CD14-positive monocyte (primary cell): ENCODE measurements at regions of chr1 and their contacts with region 1.

Region 1: GRCh38 chr1:165630629-165631341 is at the start of gene MGST3:
- DNase-seq: peak; percentile 90 to 93 (median 92)
- H3K4me3 ChIP-seq: peak within 1 kb of the TSS; percentile 75 to 90 (median 83)
- H3K4me3 Mint-ChIP-seq: no peak within 1 kb of the TSS
- H3K27ac ChIP-seq: peak within 1 kb of the TSS; percentile 89 to 94
- H3K27ac Mint-ChIP-seq: no peak within 1 kb of the TSS
- H3K4me1 ChIP-seq: peaks cover 42 to 61% of the 10 kb centered on the region in 2 donors
- H3K4me1 Mint-ChIP-seq: peaks cover 39% of the 10 kb centered on the region
- H3K27me3 ChIP-seq: no peaks in the 10 kb centered on the region
- H3K27me3 Mint-ChIP-seq: no peaks in the 10 kb centered on the region
- CTCF ChIP-seq: no peak
- polyA plus RNA-seq, gene MGST3: 57.9 to 228 (median 189) TPM

Region 2: DNA sequence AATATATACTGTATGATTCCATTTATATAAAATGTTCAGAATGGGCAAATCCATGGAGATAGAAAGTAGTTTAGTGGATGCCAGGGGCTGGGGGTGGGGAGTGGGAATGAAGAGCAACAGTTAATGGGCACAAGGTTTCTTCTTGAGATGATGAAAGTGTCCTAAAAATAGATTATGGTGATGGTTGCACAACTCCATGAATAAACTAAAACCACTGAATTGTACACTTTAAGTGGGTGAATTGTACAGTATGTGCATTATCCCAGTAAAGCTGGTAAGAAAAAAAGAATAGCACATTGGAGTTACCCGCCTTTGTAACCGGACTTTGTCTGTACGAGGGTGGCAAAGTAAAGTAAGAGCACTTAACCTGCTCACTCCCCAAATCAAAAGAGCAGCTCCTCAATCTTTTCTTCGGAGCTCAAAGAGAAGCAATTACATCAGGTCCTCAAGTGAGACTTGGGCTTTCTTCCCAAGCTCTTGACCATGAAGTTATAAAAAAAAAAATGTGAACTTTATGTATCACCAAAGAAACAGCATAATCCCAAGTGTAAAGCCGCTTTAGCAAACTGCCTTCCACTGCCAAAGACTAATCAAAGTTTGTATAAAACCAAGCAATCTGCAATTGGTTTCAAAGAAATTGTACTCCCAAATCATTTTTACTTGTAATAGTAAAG is 35.5 kb after region 1 on chr1:
- intact Hi-C with region 1: loop called in 1 of 2 experiments (anchors 5 kb)
- DNase-seq: peak; percentile 12 to 42 (median 16)
- H3K4me3 ChIP-seq: peak overlapping the region in 2 of 3 experiments; percentile 36 to 58
- H3K4me3 Mint-ChIP-seq: peak overlapping the region in 1 of 2 donors; percentile 70
- H3K27ac ChIP-seq: peak overlapping the region in 1 of 2 donors; percentile 74
- H3K27ac Mint-ChIP-seq: peak overlapping the region; percentile 6 to 89 (median 82)
- H3K4me1 ChIP-seq: peaks cover 37 to 46% of the 10 kb centered on the region in 2 donors
- H3K4me1 Mint-ChIP-seq: peaks cover 47% of the 10 kb centered on the region
- H3K27me3 ChIP-seq: no peaks in the 10 kb centered on the region
- H3K27me3 Mint-ChIP-seq: no peaks in the 10 kb centered on the region
- CTCF ChIP-seq: no peak

Region 3: GRCh38 chr1:165697881-165698760 is 67.3 kb after region 1 on chr1 and contains the start of gene ALDH9A1:
- intact Hi-C with region 1: loop called (anchors 5 to 10 kb)
- DNase-seq: peak; percentile 51 to 68 (median 57)
- H3K4me3 ChIP-seq: peak within 1 kb of the TSS; percentile 81 to 99 (median 89)
- H3K4me3 Mint-ChIP-seq: peak within 1 kb of the TSS; percentile 94 to 98
- H3K27ac ChIP-seq: peak within 1 kb of the TSS; percentile 91 to 93
- H3K27ac Mint-ChIP-seq: peak within 1 kb of the TSS; percentile 90 to 97 (median 96)
- H3K4me1 ChIP-seq: peaks cover 27 to 32% of the 10 kb centered on the region in 2 donors
- H3K4me1 Mint-ChIP-seq: peaks cover 30% of the 10 kb centered on the region
- H3K27me3 ChIP-seq: no peaks in the 10 kb centered on the region
- H3K27me3 Mint-ChIP-seq: peaks cover 0 to 3% (median 0%) of the 10 kb centered on the region in 3 donors
- CTCF ChIP-seq: peak; percentile 19
- polyA plus RNA-seq, gene ALDH9A1: 23.7 to 60.0 (median 57.7) TPM

Region 4: DNA sequence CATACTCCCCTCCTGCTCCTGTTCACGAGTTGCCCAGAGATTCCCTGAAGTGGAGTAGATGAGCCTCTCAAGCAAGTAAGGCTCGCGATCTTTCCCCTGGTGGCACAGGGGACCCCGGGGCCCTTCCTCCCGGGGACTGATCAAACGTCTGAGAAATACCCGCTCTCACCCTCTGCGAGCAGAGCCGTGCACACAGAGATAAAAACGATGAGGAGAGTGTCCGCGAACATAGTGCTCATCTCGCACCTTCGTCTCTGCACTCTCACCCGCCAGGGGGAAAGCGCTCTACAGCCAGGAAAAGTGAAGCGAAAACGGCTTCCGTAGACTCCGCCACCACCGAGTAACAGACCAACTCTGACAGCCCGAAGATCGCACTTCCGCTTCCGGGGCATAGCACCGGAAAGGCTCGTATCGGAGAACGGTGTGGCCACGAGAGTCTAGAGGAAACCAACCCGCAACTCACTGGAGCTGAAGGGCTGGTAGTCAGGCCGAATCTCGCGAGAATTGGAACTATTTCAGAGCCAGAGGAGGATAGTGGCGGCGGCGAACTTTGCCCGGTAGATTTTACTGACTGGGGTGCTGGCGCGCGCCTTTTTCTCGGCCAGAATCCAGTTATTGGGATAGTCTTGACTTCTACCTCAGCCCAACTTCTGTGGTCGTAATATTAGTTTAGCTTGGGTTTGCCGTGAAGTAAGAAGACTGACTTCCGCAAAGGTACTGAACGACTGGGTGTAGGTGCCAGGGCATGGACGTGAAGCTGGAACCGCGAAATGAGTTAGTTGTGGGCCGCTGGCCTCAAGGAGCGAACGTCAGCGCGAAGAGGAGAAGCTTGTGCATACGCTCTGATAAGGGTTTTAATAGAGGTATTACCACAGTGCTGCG is 138.0 kb after region 1 on chr1 and contains the start of gene TMCO1:
- intact Hi-C with region 1: loop called in 1 of 2 experiments (anchors 10 kb)
- DNase-seq: peak; percentile 98 to 99 (median 99)
- H3K4me3 ChIP-seq: peak within 1 kb of the TSS; percentile 50 to 98 (median 94)
- H3K4me3 Mint-ChIP-seq: peak within 1 kb of the TSS; percentile 85 to 99
- H3K27ac ChIP-seq: peak within 1 kb of the TSS; percentile 92 to 99
- H3K27ac Mint-ChIP-seq: peak within 1 kb of the TSS; percentile 96 to 99 (median 98)
- H3K4me1 ChIP-seq: peaks cover 15 to 32% of the 10 kb centered on the region in 2 donors
- H3K4me1 Mint-ChIP-seq: peaks cover 42% of the 10 kb centered on the region
- H3K27me3 ChIP-seq: no peaks in the 10 kb centered on the region
- H3K27me3 Mint-ChIP-seq: no peaks in the 10 kb centered on the region
- CTCF ChIP-seq: peak; percentile 17
- polyA plus RNA-seq, gene TMCO1: 24.1 to 154 (median 146) TPM